ENCODE measurements at regions of chr11 and their contacts with region 1.

Region 1: DNA sequence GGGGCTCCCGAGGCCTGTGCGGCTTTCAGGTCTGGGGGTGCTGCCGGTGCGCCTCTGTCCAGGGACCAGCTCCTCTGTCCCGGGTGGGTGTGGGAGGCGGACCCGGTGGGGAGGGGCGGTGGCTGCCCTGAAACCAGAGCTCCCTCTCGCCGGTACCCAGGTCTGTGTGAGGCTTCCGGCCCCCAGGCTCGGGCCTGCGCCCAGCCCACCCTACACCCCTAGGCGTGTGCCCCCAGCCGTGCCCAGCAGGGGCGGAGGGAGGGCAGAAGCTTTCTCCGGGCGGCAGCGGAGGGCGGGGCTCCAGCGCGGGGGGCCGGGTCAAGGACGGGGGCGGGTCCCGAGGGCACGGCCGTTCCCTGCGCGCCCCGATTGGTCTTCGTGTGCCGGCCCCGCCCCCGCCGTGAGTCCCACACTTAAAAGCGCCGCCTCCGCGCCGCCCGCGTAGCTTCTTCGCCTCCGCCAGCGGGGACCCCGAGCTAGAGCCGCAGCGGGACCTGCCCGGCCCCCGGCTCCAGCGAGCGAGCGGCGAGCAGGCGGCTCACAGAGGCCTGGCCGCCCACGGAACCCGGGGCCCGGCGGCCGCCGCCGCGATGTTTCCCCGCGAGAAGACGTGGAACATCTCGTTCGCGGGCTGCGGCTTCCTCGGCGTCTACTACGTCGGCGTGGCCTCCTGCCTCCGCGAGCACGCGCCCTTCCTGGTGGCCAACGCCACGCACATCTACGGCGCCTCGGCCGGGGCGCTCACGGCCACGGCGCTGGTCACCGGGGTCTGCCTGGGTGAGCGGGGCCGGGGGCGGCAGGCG is 616 bp downstream of the PNPLA2 start:
- DNase-seq: peak; percentile 91
- H3K4me3 Mint-ChIP-seq: peak overlapping the region; percentile 74
- H3K27ac Mint-ChIP-seq: peak overlapping the region; percentile 47
- H3K4me1 Mint-ChIP-seq: peaks cover 15% of the 10 kb centered on the region
- H3K27me3 Mint-ChIP-seq: no peaks in the 10 kb centered on the region

Region 2: DNA sequence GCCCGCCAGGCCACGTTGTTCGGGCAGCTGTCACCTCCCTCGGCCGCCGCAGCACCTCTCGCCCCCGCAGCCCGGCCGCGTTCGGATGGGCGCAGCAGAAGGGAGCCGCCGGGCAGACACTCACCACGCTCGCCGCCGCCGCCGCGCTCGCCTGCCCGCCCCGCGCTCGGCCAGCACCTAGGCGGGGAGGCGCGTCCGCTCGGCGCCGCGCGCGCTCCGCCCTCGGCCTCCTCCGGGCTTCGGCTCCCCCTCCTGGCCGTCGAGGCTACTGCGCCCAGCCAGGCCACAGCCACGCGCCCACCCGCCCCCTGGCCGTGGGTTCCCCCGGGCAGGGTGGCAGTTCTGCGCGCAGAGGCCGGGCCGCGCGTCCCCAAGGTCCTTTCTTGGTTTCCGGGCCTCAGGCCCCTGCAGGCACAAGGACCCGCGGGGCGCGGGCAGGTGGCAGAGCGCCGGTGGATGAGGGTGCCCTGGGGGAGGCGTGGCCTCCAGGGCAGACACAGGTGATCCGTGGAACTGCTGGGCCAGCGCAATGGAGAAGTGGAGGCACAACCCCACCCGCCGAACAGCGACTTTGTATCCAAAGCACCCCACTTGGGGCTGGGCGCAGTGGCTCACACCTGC is 21.1 kb before region 1 on chr11 and contains the start of gene SLC25A22:
- CTCF ChIA-PET with region 1: no interaction called
- POLR2A ChIA-PET with region 1: interaction called, 12 read pairs
- DNase-seq: peak; percentile 87
- H3K4me3 Mint-ChIP-seq: peak within 1 kb of the TSS; percentile 93
- H3K27ac Mint-ChIP-seq: peak within 1 kb of the TSS; percentile 89
- H3K4me1 Mint-ChIP-seq: peaks cover 37% of the 10 kb centered on the region
- H3K27me3 Mint-ChIP-seq: no peaks in the 10 kb centered on the region
- total RNA-seq, gene SLC25A22: 35.7 to 38.3 TPM

Region 3: GRCh38 chr11:803770-804598 is 15.3 kb before region 1 on chr11:
- CTCF ChIA-PET with region 1: interaction called, 8 read pairs
- POLR2A ChIA-PET with region 1: interaction called, 62 read pairs
- DNase-seq: no peak
- H3K4me3 Mint-ChIP-seq: peak overlapping the region; percentile 82
- H3K27ac Mint-ChIP-seq: peak overlapping the region; percentile 78
- H3K4me1 Mint-ChIP-seq: peaks cover 40% of the 10 kb centered on the region
- H3K27me3 Mint-ChIP-seq: no peaks in the 10 kb centered on the region

Region 4: GRCh38 chr11:832321-833113 is 13.2 kb after region 1 on chr11 and contains the start of gene CD151:
- CTCF ChIA-PET with region 1: no interaction called
- POLR2A ChIA-PET with region 1: interaction called, 74 read pairs
- DNase-seq: peak; percentile 61
- H3K4me3 Mint-ChIP-seq: peak within 1 kb of the TSS; percentile 47
- H3K27ac Mint-ChIP-seq: no peak within 1 kb of the TSS
- H3K4me1 Mint-ChIP-seq: peaks cover 36% of the 10 kb centered on the region
- H3K27me3 Mint-ChIP-seq: peaks cover 37% of the 10 kb centered on the region
- total RNA-seq, gene CD151: 28.0 to 28.6 TPM

Region 5: DNA sequence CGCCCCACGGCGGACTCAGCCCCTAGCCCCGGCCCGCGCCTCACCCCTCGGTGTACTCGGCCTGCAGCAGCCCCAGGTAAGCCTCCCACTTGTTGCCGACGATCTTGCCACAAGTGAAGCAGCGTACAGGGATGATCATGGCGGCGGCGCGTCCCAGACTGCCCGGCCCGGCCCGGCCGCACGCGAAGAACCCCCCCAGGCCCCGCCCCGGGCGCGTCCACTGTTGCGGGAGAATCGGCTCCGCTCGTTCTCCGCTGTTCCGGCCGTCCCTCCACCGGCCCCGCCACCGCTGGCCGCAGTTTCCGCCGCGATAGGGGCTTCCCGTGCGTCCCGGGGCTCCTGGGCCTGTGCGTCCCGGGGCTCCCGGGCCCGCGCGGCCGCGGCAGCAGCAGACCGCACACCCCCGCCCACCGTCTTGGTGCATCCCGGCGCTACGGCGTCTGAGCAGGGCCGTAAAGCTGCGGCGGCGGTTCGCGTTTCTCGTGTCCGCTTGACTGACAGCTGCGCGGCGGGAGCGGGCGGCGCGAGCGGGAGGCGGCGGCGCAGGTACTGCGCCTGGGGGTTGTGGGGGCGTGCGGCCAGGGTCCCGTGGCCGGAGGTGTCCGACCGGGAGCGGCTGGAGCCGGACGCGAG is 23.2 kb after region 1 on chr11 and contains the starts of genes POLR2L and TSPAN4:
- CTCF ChIA-PET with region 1: interaction called, 3 read pairs
- POLR2A ChIA-PET with region 1: interaction called, 32 read pairs
- DNase-seq: peak; percentile 88
- H3K4me3 Mint-ChIP-seq: peak within 1 kb of the TSS; percentile 83
- H3K27ac Mint-ChIP-seq: peak within 1 kb of the TSS; percentile 76
- H3K4me1 Mint-ChIP-seq: peaks cover 24% of the 10 kb centered on the region
- H3K27me3 Mint-ChIP-seq: no peaks in the 10 kb centered on the region
- total RNA-seq, gene POLR2L: 59.3 to 61.5 TPM
- total RNA-seq, gene TSPAN4: 4.4 to 4.5 TPM

Measured in activated CD4-positive, alpha-beta memory T cell treated with anti-CD3 and anti-CD28 coated beads, Interleukin-2, amount 10 ng/mL, durations not matched to agents 7 days and 5 days (primary cell).